Panc1 (cell line): ENCODE measurements at regions of chr2 and their contacts with region 1.

Region 1: DNA sequence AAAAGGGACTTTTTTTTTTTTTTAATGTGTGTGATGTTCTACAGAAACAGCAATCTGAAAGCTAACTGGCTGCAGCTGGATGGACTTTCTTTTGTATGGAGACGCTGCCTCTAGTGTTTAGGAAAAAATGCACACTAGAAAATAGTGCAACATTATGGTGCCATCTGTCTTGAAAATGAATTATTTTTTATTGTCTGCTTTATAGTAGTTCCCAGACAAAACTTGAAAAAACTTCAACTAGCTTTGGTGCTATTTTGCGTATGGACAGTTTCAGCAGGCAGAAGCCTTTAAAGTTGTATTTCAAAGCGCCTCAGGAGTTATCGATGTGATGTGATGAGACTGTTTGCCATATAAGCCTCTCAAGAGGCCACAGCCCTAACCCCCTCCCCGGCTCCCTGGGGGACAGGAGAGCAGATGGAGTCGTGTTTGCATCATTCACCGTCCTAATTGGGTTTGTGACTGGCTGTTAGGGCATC is 86.9 kb downstream of the LTBP1 start:
- DNase-seq: no peak
- ATAC-seq: no peak
- H3K4me3 ChIP-seq: no peak overlapping the region
- H3K27ac ChIP-seq: no peak overlapping the region
- H3K4me1 ChIP-seq: no peaks in the 10 kb centered on the region
- H3K27me3 ChIP-seq: no peaks in the 10 kb centered on the region
- CTCF ChIP-seq: peak; percentile 63; the same call in 1 of the 2 replicates

Region 2: DNA sequence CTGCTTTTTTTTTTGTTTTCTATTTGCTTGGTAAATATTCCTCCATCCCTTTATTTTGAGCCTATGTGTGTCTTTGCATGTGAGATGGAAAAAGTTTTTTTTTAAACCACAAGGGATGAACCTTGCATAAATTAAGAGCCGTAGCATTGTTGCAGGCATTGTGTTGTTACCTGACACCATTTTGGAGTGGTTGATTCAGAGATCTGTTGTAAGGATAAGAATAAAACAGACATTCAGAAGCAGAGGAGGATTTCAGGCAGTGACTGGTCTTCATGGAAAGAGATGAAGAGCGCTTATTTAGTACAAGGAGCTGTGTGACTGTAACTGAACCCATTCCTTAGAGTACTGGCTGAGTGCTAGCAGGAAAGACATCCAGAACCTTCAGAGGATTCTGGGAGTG is 14.3 kb after region 1 on chr2:
- CTCF ChIA-PET with region 1: no interaction called
- POLR2A ChIA-PET with region 1: no interaction called
- in situ Hi-C with region 1: no loop called
- intact Hi-C with region 1: no loop called
- DNase-seq: no peak
- ATAC-seq: no peak
- H3K4me3 ChIP-seq: no peak overlapping the region
- H3K27ac ChIP-seq: no peak overlapping the region
- H3K4me1 ChIP-seq: no peaks in the 10 kb centered on the region
- H3K27me3 ChIP-seq: no peaks in the 10 kb centered on the region
- CTCF ChIP-seq: no peak

Region 3: GRCh38 chr2:33158482-33159003 is 124.9 kb after region 1 on chr2:
- CTCF ChIA-PET with region 1: no interaction called
- POLR2A ChIA-PET with region 1: no interaction called
- in situ Hi-C with region 1: no loop called
- intact Hi-C with region 1: no loop called
- DNase-seq: no peak
- ATAC-seq: no peak
- H3K4me3 ChIP-seq: no peak overlapping the region
- H3K27ac ChIP-seq: no peak overlapping the region
- H3K4me1 ChIP-seq: no peaks in the 10 kb centered on the region
- H3K27me3 ChIP-seq: no peaks in the 10 kb centered on the region
- CTCF ChIP-seq: no peak

Region 4: DNA sequence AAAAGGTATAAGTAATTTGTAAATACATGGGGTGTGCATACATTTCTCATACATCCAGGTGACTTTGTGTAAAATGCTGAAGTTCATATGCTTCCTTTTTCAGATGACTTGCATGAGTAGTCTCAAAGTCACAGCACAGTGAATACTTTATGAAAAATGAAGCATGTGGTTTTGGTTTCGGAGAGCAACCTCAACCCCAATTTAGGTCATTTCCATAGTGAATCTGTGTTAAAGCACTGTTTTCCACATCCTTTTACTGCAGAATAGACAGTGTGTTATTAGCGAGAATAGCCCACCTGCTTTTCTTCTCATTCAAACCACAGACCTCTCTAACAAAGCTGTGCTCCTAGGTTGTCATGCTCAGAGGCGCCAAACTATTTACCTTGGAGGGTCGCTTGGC is 238.4 kb after region 1 on chr2:
- CTCF ChIA-PET with region 1: no interaction called
- POLR2A ChIA-PET with region 1: no interaction called
- in situ Hi-C with region 1: no loop called
- intact Hi-C with region 1: loop called (anchors 5 kb)
- DNase-seq: no peak
- ATAC-seq: no peak
- H3K4me3 ChIP-seq: no peak overlapping the region
- H3K27ac ChIP-seq: no peak overlapping the region
- H3K4me1 ChIP-seq: no peaks in the 10 kb centered on the region; the same call in 1 of the 2 replicates
- H3K27me3 ChIP-seq: no peaks in the 10 kb centered on the region
- CTCF ChIP-seq: no peak

Region 5: GRCh38 chr2:33372940-33373553 is 339.4 kb after region 1 on chr2:
- CTCF ChIA-PET with region 1: interaction called, 3 read pairs
- POLR2A ChIA-PET with region 1: no interaction called
- in situ Hi-C with region 1: no loop called
- intact Hi-C with region 1: loop called (anchors 5 kb)
- DNase-seq: peak; percentile 62
- ATAC-seq: no peak
- H3K4me3 ChIP-seq: no peak overlapping the region
- H3K27ac ChIP-seq: no peak overlapping the region
- H3K4me1 ChIP-seq: no peaks in the 10 kb centered on the region
- H3K27me3 ChIP-seq: no peaks in the 10 kb centered on the region
- CTCF ChIP-seq: peak; percentile 82; the same call in 1 of the 2 replicates